Cardiac septum (tissue), 1 donor: ENCODE measurements at regions of chr1 and their contacts with region 1.

Region 1: GRCh38 chr1:174159252-174160108 is at the start of gene RABGAP1L:
- DNase-seq: peak; percentile 97
- total RNA-seq, gene RABGAP1L: 109 TPM

Region 2: DNA sequence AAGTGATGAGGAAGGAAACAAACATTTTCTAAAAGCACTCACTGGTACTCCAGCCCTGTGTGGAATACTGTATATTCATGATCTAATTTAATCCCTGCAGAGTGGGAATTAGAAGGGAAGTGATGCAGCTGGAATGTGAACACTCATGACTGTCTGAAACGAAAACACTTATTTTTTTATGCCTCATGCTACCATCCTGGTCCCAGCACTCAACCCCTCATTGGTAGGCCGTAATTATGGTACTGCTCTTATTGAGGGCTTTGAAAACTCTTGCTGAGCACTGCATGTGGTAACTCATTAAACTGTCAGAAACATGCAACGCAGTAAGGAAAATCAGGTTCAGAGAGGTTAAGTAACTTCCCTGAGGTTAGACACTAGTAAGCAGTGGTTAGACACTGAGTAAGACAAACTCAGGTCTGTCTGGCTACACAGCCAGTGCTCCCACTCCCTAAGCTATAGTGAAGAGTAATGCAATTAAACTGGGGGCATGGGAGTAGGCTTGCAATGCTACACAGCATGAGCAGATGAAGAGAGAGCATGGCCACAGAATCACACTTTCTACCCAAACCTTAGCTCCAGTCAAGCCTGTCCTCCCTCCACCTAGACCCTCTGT is 935.1 kb before region 1 on chr1:
- intact Hi-C with region 1: no loop called
- DNase-seq: no peak

Region 3: DNA sequence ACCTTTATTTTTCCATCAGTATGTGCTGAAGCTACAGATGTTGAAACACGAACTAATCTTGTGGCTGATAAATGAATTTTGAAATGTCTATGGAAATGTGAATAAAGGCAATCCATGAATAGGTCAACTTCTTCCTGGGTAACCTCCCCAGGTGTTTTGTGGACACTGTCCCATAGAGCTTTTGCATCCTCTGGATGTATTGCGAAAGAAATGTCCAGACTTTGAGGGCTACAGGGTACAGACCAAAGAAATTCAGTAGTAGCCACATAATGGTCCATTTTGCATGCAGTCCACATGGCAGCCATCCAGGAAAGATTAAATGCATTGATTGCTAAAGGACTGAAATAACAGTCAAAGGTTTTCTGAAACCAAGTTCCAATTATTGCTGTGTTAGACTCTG is 356.5 kb before region 1 on chr1:
- intact Hi-C with region 1: no loop called
- DNase-seq: no peak

Region 4: GRCh38 chr1:174206148-174206836 is 46.8 kb after region 1 on chr1:
- intact Hi-C with region 1: loop called (anchors 2 kb)
- DNase-seq: no peak

Region 5: GRCh38 chr1:174239541-174239940 is 80.1 kb after region 1 on chr1:
- intact Hi-C with region 1: no loop called
- DNase-seq: no peak